Kidney (tissue), 22 donors: ENCODE measurements at regions of chr7 and their contacts with region 1.

Region 1: GRCh38 chr7:322111-322671 is 32.2 kb downstream of the FOXL3 start:
- DNase-seq: peak; percentile 58 to 93 (median 83)
- H3K4me3 ChIP-seq: no peak overlapping the region
- H3K27ac ChIP-seq: no peak overlapping the region
- H3K4me1 ChIP-seq: peaks cover 3 to 23% (median 15%) of the 10 kb centered on the region in 3 donors
- H3K27me3 ChIP-seq: no peaks in the 10 kb centered on the region
- CTCF ChIP-seq: peak; percentile 99

Region 2: GRCh38 chr7:636396-636795 is 314.2 kb after region 1 on chr7:
- intact Hi-C with region 1: loop called (anchors 10 kb)
- DNase-seq: no peak
- H3K4me3 ChIP-seq: no peak overlapping the region
- H3K27ac ChIP-seq: no peak overlapping the region
- H3K4me1 ChIP-seq: no peaks in the 10 kb centered on the region
- H3K27me3 ChIP-seq: no peaks in the 10 kb centered on the region
- CTCF ChIP-seq: peak; percentile 40

Region 3: GRCh38 chr7:768881-769504 is 446.8 kb after region 1 on chr7:
- intact Hi-C with region 1: loop called (anchors 5 kb)
- DNase-seq: peak; percentile 47 to 90 (median 60)
- H3K4me3 ChIP-seq: peak overlapping the region in 2 of 3 donors; percentile 39 to 70
- H3K27ac ChIP-seq: peak overlapping the region; percentile 59
- H3K4me1 ChIP-seq: peaks cover 7 to 30% (median 28%) of the 10 kb centered on the region in 3 donors
- H3K27me3 ChIP-seq: no peaks in the 10 kb centered on the region
- CTCF ChIP-seq: no peak